CD8-positive, alpha-beta T cell (primary cell): ENCODE measurements at regions of chr5 and their contacts with region 1.

Region 1: GRCh38 chr5:112551419-112552032 is 132.4 kb upstream of the EPB41L4A start:
- DNase-seq: peak in 5 of 9 experiments; percentile 25 to 71 (median 32)
- ATAC-seq: peak; percentile 51
- H3K4me3 ChIP-seq: no peak overlapping the region
- H3K4me3 Mint-ChIP-seq: no peak overlapping the region
- H3K27ac ChIP-seq: no peak overlapping the region
- H3K27ac Mint-ChIP-seq: no peak overlapping the region
- H3K4me1 ChIP-seq: no peaks in the 10 kb centered on the region
- H3K4me1 Mint-ChIP-seq: no peaks in the 10 kb centered on the region
- H3K27me3 ChIP-seq: no peaks in the 10 kb centered on the region
- H3K27me3 Mint-ChIP-seq: no peaks in the 10 kb centered on the region
- CTCF ChIP-seq: peak; percentile 76

Region 2: GRCh38 chr5:112534611-112535255 is 16.8 kb before region 1 on chr5:
- CTCF ChIA-PET with region 1: interaction called, 18 read pairs
- POLR2A ChIA-PET with region 1: no interaction called
- intact Hi-C with region 1: no loop called
- DNase-seq: no peak
- ATAC-seq: no peak
- H3K4me3 ChIP-seq: no peak overlapping the region
- H3K4me3 Mint-ChIP-seq: no peak overlapping the region
- H3K27ac ChIP-seq: no peak overlapping the region
- H3K27ac Mint-ChIP-seq: no peak overlapping the region
- H3K4me1 ChIP-seq: peaks cover 4% of the 10 kb centered on the region
- H3K4me1 Mint-ChIP-seq: peaks cover 7% of the 10 kb centered on the region
- H3K27me3 ChIP-seq: no peaks in the 10 kb centered on the region
- H3K27me3 Mint-ChIP-seq: peaks cover 13% of the 10 kb centered on the region
- CTCF ChIP-seq: no peak

Region 3: DNA sequence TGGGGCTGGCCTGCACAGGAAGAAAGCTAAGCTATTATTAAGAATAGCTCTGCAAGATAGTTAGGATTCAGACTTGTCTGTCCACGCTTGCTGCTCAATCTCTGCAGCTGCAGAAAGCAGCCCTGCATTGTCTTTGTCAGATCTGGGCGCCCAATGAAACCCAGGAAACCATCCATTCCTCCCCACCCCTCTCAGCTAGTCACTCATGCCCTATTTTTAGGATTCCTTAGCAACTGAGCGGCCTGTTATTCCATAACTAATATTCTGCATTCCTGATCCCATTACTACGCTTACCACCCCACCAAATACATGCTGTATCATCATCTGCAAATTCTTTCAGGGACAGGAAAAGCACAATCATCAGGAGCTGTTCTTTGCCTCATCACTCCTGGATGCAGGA is 133.2 kb after region 1 on chr5:
- CTCF ChIA-PET with region 1: interaction called, 13 read pairs
- POLR2A ChIA-PET with region 1: no interaction called
- intact Hi-C with region 1: loop called in 1 of 2 experiments (anchors 5 kb)
- DNase-seq: no peak
- ATAC-seq: no peak
- H3K4me3 ChIP-seq: no peak overlapping the region
- H3K4me3 Mint-ChIP-seq: no peak overlapping the region
- H3K27ac ChIP-seq: no peak overlapping the region
- H3K27ac Mint-ChIP-seq: no peak overlapping the region
- H3K4me1 ChIP-seq: no peaks in the 10 kb centered on the region
- H3K4me1 Mint-ChIP-seq: no peaks in the 10 kb centered on the region
- H3K27me3 ChIP-seq: no peaks in the 10 kb centered on the region
- H3K27me3 Mint-ChIP-seq: peaks cover 23% of the 10 kb centered on the region
- CTCF ChIP-seq: no peak

Region 4: GRCh38 chr5:112757468-112758208 is 206.1 kb after region 1 on chr5:
- CTCF ChIA-PET with region 1: interaction called, 198 read pairs
- POLR2A ChIA-PET with region 1: interaction called, 3 read pairs
- intact Hi-C with region 1: loop called (anchors 1 kb)
- DNase-seq: peak in 3 of 9 experiments; percentile 51 to 76 (median 69)
- ATAC-seq: peak; percentile 84
- H3K4me3 ChIP-seq: no peak overlapping the region
- H3K4me3 Mint-ChIP-seq: no peak overlapping the region
- H3K27ac ChIP-seq: no peak overlapping the region
- H3K27ac Mint-ChIP-seq: peak overlapping the region; percentile 34
- H3K4me1 ChIP-seq: no peaks in the 10 kb centered on the region
- H3K4me1 Mint-ChIP-seq: peaks cover 12% of the 10 kb centered on the region
- H3K27me3 ChIP-seq: no peaks in the 10 kb centered on the region
- H3K27me3 Mint-ChIP-seq: no peaks in the 10 kb centered on the region
- CTCF ChIP-seq: peak; percentile 83

Region 5: DNA sequence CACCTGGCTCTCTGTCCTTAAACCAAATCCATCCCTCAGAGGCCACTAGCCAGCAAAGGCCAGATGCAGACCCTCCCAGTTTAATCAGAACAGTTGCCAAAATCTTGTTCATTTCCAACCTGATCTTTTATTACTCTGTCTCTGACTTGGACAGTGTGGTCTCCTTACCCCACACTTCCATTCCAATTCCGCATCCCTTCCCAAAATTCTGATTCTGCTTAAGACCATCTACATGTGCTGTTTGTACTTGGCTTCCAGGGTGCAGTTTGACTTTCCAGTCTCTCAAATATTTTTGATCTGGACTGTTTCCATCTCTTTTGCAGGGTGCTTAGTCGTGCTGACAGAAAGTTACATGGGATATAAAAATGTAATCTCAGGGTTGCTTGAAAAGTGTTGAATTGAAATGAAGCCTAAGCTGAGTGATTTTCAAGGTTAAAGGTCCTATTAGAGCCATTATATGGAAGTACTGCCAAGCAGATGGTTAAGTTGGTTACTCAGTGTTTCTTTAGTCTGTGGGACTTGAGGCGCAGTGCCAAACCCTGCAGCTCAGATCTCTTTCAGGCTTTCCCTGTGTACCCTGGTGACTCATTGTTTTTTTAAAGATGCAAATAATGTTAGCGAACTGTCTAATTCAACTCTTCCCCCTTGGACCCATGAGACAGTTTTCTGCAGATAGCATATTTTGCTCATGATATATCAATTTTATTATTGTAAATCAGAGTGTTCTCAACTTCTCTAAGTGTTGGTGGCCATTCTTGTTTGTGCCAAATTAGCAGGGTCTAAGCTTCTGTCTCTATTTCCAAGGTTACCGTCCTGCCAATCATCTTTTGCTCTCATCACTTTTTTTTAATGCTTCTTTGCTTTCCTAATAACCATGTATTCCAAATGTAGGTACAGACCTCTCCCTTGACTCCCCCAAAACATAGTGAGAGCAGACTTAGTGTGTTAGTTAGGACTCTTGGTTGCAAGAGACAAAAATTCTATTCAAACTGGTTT is 406.9 kb after region 1 on chr5:
- CTCF ChIA-PET with region 1: interaction called, 3 read pairs
- POLR2A ChIA-PET with region 1: no interaction called
- intact Hi-C with region 1: loop called in 1 of 2 experiments (anchors 5 kb)
- DNase-seq: no peak
- ATAC-seq: no peak
- H3K4me3 ChIP-seq: no peak overlapping the region
- H3K4me3 Mint-ChIP-seq: no peak overlapping the region
- H3K27ac ChIP-seq: no peak overlapping the region
- H3K27ac Mint-ChIP-seq: no peak overlapping the region
- H3K4me1 ChIP-seq: no peaks in the 10 kb centered on the region
- H3K4me1 Mint-ChIP-seq: peaks cover 2% of the 10 kb centered on the region
- H3K27me3 ChIP-seq: no peaks in the 10 kb centered on the region
- H3K27me3 Mint-ChIP-seq: peaks cover 2% of the 10 kb centered on the region
- CTCF ChIP-seq: no peak

Region 6: GRCh38 chr5:113330533-113331208 is 779.1 kb after region 1 on chr5:
- CTCF ChIA-PET with region 1: no interaction called
- POLR2A ChIA-PET with region 1: no interaction called
- intact Hi-C with region 1: loop called in 1 of 2 experiments (anchors 2 kb)
- DNase-seq: peak in 3 of 9 experiments; percentile 9 to 81 (median 66)
- ATAC-seq: peak; percentile 83
- H3K4me3 ChIP-seq: no peak overlapping the region
- H3K4me3 Mint-ChIP-seq: peak overlapping the region; percentile 35
- H3K27ac ChIP-seq: no peak overlapping the region
- H3K27ac Mint-ChIP-seq: peak overlapping the region; percentile 12
- H3K4me1 ChIP-seq: peaks cover 7% of the 10 kb centered on the region
- H3K4me1 Mint-ChIP-seq: peaks cover 19% of the 10 kb centered on the region
- H3K27me3 ChIP-seq: no peaks in the 10 kb centered on the region
- H3K27me3 Mint-ChIP-seq: peaks cover 2% of the 10 kb centered on the region
- CTCF ChIP-seq: peak; percentile 58